ENCODE measurements at regions of chr19 and their contacts with region 1.

Region 1: DNA sequence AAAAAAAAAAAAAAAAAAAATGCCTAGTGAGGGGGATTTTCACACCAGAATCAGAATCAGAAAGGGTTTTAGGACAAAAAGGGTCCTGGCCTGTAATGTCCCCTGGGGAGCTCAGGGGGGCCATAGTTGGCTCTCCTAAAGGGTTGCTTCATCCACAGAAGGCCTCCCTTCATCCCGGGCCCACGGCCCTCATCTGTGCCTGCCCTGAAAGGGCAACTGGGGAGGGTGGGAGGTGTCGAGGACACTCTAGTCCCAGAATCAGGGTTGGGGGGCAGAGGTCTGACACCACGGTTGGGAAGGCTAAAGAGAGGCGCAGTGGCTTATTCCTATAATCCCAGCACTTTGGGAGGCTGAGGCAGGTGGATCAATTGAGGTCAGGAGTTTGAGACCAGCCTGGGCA is 22.5 kb upstream of the ZNRF4 start:
- DNase-seq: no peak
- H3K4me3 Mint-ChIP-seq: no peak overlapping the region
- H3K27ac Mint-ChIP-seq: no peak overlapping the region
- H3K4me1 Mint-ChIP-seq: no peaks in the 10 kb centered on the region
- H3K27me3 Mint-ChIP-seq: peaks cover 40% of the 10 kb centered on the region
- CTCF ChIP-seq: no peak

Region 2: DNA sequence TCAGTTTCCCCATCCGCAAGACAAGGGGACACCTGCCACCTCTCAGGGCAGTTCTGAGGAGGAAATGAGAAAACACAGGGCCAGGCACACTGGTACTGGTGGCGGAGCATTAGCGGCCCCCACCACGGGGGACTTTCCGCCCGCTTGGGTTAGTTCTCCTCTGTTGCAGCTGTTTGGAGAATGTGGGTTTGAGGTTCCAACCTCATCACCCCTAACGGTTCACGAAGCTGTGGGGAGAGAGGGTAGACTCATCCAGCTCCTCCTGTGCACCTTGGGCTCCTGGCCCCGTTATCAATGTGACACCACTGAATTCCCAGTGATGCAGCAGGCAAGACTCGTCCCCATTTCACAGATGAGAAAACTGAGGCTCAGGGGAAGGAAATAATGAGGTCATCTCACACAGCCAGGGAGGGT is 102.4 kb before region 1 on chr19:
- CTCF ChIA-PET with region 1: no interaction called
- intact Hi-C with region 1: no loop called
- DNase-seq: no peak
- H3K4me3 Mint-ChIP-seq: no peak overlapping the region
- H3K27ac Mint-ChIP-seq: no peak overlapping the region
- H3K4me1 Mint-ChIP-seq: no peaks in the 10 kb centered on the region
- H3K27me3 Mint-ChIP-seq: no peaks in the 10 kb centered on the region
- CTCF ChIP-seq: no peak

Region 3: DNA sequence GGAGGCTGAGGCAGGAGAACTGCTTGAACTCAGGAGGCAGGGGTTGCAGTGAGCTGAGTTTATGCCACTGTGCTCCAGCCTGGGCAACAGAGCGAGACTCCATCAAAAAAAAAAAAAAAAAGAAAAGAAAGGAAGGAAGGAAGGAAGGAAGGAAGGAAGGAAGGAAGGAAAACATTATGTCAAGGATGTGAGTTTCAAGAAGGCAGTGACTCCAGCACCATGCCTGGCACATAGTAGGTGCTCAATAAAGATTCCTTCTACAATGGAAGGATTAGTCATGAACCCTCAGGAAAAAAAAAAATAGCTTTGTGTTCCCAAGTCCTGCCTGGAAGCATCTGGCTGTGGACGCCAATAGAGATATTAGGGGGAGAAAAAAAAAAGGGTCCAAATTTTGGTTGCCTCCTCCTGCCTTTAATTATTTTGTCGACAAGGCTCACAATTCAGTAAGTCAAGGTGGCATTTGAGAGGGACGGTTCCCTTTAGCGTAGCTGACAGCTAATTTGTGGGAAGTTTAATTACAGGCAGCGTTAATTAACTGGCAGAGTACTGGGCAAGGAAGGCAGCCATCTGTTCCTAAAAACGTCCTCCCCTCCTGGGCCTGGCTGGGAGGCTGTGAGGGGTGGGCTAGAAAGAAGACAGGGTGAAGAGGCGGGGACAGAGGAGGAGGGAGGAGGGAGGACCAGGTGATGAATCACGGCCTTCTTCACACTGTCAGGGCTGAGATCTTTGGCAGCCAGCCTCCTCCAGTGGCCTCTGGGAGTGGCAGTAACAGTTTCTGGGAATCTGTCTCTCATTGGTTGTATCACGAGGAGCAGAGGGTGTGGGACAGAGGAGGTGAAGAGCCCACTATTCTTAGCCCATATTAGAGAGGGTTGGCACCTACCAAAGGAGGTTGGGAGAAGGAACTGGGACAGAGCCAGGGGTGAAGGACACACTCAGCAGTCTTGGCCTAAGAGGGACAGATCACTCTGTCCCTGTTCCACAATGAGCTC is 12.7 kb after region 1 on chr19:
- CTCF ChIA-PET with region 1: interaction called, 11 read pairs
- intact Hi-C with region 1: no loop called
- DNase-seq: no peak
- H3K4me3 Mint-ChIP-seq: no peak overlapping the region
- H3K27ac Mint-ChIP-seq: no peak overlapping the region
- H3K4me1 Mint-ChIP-seq: no peaks in the 10 kb centered on the region
- H3K27me3 Mint-ChIP-seq: peaks cover 74% of the 10 kb centered on the region
- CTCF ChIP-seq: no peak